ENCODE measurements at regions of chr17 and their contacts with region 1.

Region 1: DNA sequence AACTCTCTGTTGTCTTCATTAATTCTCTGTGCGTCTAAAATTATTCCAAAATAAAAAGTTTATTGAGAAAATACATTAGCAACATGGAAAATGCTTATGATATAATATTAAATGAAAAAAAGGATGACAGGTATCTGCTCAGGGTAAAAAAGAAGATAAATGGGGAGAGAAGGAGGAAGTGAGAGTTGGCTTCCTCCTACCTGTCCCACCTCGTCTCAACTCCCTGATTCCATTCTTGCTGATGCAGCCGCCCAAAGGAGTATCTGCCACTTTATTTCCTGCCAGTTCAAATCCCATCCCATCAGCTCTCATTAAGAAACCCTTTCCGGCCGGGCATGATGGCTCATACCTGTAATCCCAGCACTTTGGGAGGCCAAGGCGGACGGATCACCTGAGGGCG is 72.5 kb upstream of the ALOX12 start:
- DNase-seq: no peak
- H3K4me3 ChIP-seq: no peak overlapping the region
- H3K27ac ChIP-seq: no peak overlapping the region
- H3K4me1 ChIP-seq: no peaks in the 10 kb centered on the region
- H3K27me3 ChIP-seq: no peaks in the 10 kb centered on the region
- CTCF ChIP-seq: no peak
- POLR2A ChIP-seq: no peak

Region 2: GRCh38 chr17:6981426-6981825 is 58.0 kb after region 1 on chr17:
- intact Hi-C with region 1: loop called (anchors 2 kb)
- DNase-seq: no peak
- H3K4me3 ChIP-seq: no peak overlapping the region
- H3K27ac ChIP-seq: no peak overlapping the region
- H3K4me1 ChIP-seq: no peaks in the 10 kb centered on the region
- H3K27me3 ChIP-seq: no peaks in the 10 kb centered on the region
- CTCF ChIP-seq: no peak
- POLR2A ChIP-seq: no peak

Measured in vagina (tissue), 2 donors.